ENCODE measurements at regions of chr6 and their contacts with region 1.

Region 1: DNA sequence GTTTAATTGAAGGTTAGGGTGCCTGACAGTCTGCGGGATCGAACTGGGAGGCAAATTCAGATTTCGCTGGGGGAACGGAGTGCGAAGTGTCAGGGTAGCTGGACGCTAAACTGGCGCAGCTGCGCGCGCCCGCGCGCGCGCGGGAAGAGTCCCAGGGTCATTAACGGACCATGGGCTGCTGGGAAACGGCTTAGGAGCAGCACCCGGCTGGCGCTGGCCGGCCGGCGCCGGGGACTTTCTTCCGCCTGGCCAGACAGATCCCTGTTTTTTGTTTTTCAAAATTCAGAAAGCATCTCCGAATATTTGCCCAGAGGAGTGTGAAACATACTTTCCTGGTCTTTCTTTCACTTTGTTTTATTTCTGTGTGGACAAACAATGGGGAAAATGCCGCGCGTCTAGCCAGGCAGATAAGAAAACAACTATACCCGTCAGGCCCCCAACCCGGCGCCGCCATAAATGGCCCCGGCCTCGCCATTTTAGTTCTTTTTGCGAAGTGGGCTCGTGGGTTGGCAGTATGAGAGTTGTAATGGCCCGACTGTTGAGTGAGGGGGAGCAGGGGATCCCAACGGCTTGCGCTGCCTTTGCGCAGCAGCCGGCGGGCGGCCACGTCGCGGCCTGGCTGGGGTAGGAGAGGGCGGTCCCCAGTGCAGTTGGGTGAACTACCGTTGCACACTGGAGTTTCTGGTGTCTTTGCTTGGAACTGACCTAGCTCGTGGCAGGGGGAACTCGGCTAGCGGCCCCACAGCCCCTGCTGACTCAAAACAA is 7.1 kb downstream of the HSPA1B start:
- DNase-seq: peak; percentile 72
- H3K4me3 Mint-ChIP-seq: peak overlapping the region; percentile 94
- H3K27ac Mint-ChIP-seq: peak overlapping the region; percentile 100
- H3K4me1 Mint-ChIP-seq: peaks cover 49% of the 10 kb centered on the region
- H3K27me3 Mint-ChIP-seq: no peaks in the 10 kb centered on the region

Region 2: DNA sequence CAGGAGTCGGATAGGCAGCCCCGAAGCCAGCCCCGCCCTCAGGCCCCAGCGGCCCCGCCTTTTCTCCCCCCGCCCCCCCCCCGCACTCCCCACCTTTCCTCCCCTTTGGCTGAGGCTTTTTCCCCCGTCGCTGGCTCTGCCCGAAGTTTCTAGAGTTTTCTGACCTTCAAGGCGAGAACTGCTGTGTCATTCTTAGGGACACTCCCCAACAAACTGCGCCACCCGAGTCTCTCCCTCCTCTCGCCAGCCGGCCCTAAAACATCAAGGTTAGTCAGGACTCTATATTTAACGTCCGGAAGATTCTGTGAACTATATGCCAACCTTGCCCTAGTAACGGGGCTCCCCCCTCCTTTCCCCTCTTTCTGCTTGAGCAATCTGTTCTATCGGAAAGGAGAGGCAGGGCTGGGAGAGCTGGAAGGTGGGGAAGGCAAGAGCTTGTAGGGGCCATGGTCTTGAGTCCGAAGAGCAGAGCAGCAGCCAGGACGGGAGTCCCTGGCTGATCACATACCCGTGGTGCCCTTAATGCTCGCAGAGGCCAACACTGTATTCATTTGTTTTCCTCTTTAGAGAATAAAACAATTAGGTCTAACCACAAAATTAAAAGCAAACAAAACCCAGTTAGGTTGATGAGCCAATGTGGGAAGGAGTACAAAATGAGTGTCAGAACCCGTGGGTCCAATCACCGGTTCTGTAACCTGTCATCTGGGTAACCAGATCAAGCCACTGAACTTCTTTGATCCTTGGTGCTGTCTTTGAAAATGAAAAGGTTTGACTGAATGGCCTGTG is 12.4 kb before region 1 on chr6:
- intact Hi-C with region 1: no loop called
- DNase-seq: peak; percentile 44
- H3K4me3 Mint-ChIP-seq: peak overlapping the region; percentile 99
- H3K27ac Mint-ChIP-seq: peak overlapping the region; percentile 99
- H3K4me1 Mint-ChIP-seq: peaks cover 73% of the 10 kb centered on the region
- H3K27me3 Mint-ChIP-seq: no peaks in the 10 kb centered on the region

Region 3: DNA sequence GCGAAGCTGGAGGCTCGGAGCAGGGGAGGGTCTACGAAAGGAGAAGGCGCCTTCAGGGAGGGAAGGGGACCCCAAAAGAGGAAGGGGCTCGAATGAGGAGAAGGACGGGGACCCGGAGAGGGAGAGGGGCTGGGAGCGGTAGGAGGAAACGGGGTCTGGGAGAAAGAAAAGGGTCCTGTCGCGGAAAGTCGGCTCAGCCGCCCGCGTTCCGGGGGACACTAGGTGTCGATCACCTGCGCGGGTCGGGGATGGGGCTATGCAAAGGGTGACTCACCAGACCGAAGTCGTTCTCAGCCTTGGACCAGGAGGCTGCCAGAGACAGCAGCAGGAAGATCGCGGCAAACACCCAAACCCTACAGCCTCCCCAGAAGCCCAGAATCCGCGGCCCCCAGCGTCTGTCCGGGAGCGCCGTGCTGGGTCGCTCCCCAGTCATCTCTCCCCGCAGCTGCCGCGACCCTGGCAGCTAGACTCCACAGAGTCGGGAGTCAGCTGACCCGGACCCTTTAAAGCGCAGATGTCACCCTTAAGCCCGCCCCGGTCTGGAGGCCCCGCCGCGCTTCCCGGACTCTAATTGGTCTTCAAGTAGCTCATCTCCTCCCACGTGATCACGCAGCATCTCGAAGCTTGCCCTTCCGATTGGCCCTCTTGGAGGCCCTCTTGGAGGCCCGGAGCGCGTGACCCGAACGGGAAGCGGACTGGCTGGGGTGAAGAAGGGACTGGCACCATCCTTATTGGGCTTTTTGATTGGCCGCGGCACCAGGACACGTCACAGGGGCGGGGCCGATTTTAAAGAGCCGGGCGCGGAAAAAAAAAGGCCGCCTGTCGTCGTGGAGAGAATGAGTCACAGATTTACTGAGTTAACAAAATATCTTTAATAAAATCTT is 28.0 kb after region 1 on chr6 and contains the start of gene NEU1:
- intact Hi-C with region 1: loop called (anchors 1 kb)
- DNase-seq: peak; percentile 99
- H3K4me3 Mint-ChIP-seq: peak within 1 kb of the TSS; percentile 97
- H3K27ac Mint-ChIP-seq: peak within 1 kb of the TSS; percentile 94
- H3K4me1 Mint-ChIP-seq: peaks cover 37% of the 10 kb centered on the region
- H3K27me3 Mint-ChIP-seq: peaks cover 3% of the 10 kb centered on the region
- total RNA-seq, gene NEU1: 22.1 and 24.3 TPM in 2 replicates

Region 4: GRCh38 chr6:31927242-31927862 is 92.7 kb after region 1 on chr6 and contains the start of gene C2:
- intact Hi-C with region 1: no loop called
- DNase-seq: no peak
- H3K4me3 Mint-ChIP-seq: no peak within 1 kb of the TSS
- H3K27ac Mint-ChIP-seq: no peak within 1 kb of the TSS
- H3K4me1 Mint-ChIP-seq: no peaks in the 10 kb centered on the region
- H3K27me3 Mint-ChIP-seq: peaks cover 7% of the 10 kb centered on the region
- total RNA-seq, gene C2: 0.88 and 1.6 TPM in 2 replicates